IMR-90 (cell line): ENCODE measurements at regions of chr7 and their contacts with region 1.

Region 1: GRCh38 chr7:38411404-38411803 is 138.0 kb upstream of the TARP start:
- DNase-seq: peak; percentile 13
- ATAC-seq: no peak
- H3K4me3 ChIP-seq: no peak overlapping the region
- H3K27ac ChIP-seq: no peak overlapping the region
- H3K4me1 ChIP-seq: no peaks in the 10 kb centered on the region
- H3K27me3 ChIP-seq: no peaks in the 10 kb centered on the region
- CTCF ChIP-seq: 0 out of 2 replicates have a peak, but pooled peaks have one; percentile 6
- POLR2A ChIP-seq: no peak
- RAD21 ChIP-seq: no peak

Region 2: DNA sequence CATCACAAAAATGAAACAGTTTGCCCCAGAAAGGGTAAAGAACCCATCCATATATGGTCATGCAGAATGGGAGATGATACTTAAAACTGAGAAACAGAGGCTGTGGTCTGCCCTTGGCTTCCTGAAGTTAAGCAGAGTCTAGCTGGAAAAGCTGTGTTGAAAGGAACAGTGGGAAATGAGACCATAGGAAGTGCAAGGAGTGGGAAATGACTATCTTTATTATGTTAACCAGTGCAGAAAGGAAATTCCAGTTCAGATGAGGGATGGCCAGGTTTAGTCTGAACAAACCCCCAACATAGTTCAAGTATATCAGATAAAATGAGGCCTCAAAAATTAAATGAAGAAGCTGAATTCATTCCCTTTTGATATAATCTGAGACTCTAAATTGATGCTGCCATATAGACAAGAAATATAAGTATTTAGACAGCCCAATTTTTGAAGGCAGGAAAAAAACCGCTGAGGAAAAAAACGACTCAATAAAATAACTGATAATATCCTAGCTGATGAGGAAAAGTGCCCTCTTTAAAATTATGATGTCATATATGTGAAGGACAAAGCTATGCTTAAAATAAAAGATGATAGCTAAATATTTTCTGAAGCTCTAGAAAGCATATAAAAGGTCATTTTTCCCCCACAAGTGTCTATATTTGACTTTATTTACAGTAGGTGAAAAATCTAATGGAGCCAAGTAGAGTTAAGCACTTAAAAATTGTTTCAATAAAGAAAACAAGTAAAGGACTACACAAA is 25.5 kb before region 1 on chr7:
- CTCF ChIA-PET with region 1: no interaction called
- POLR2A ChIA-PET with region 1: no interaction called
- dilution Hi-C with region 1: no loop called
- in situ Hi-C with region 1: no loop called
- intact Hi-C with region 1: no loop called
- DNase-seq: no peak
- ATAC-seq: no peak
- H3K4me3 ChIP-seq: no peak overlapping the region
- H3K27ac ChIP-seq: no peak overlapping the region
- H3K4me1 ChIP-seq: no peaks in the 10 kb centered on the region
- H3K27me3 ChIP-seq: no peaks in the 10 kb centered on the region
- CTCF ChIP-seq: no peak
- POLR2A ChIP-seq: no peak
- RAD21 ChIP-seq: no peak

Region 3: GRCh38 chr7:39504963-39505362 is 1093.6 kb after region 1 on chr7:
- CTCF ChIA-PET with region 1: no interaction called
- POLR2A ChIA-PET with region 1: no interaction called
- dilution Hi-C with region 1: no loop called
- in situ Hi-C with region 1: loop called (anchors 25 kb)
- intact Hi-C with region 1: no loop called
- DNase-seq: peak; percentile 40
- ATAC-seq: no peak; the same call in 1 of the 2 replicates
- H3K4me3 ChIP-seq: no peak overlapping the region
- H3K27ac ChIP-seq: no peak overlapping the region
- H3K4me1 ChIP-seq: no peaks in the 10 kb centered on the region
- H3K27me3 ChIP-seq: no peaks in the 10 kb centered on the region
- CTCF ChIP-seq: no peak
- POLR2A ChIP-seq: no peak
- RAD21 ChIP-seq: no peak